Natural killer cell (primary cell): ENCODE measurements at regions of chr13 and their contacts with region 1.

Region 1: DNA sequence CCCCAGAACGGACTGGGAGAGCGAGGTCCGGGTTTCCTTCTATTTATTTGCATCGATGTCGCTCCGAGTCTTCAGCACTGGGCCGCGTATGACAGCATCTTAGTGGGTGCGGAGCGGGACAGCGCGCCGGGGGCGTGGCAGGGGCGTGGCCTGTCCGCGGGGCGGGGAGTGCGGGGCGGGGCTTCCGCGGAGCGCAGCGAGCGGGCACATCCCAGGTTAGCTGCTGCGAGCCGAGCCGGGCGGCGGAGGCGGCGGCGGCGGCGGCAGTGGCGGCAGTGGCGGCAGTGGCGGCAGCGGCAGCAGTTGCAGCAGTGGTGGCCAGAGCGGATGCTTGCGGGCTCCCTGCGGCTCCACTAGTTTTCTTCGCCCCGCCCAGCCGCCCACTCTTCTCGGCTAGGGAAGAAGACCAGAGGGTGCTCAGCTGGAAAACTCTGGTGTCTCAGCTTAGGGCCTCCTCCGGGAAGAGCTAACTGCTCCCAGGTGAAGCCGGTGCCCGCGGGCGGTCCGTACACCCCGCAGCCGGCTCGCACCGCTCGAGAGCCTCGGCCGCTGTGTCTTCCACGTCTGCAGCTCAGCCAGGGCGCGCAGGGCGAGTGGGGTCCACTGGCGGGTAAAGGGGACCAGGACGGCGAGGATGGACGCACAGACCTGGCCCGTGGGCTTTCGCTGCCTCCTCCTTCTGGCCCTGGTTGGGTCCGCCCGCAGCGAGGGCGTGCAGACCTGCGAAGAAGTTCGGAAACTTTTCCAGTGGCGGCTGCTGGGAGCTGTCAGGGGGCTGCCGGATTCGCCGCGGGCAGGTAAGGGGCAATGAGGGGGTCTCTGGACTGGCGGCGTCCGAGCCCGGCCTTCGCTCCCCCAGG is at the start of gene GPC5:
- DNase-seq: peak; percentile 68 to 88
- ATAC-seq: peak; percentile 98 to 99 (median 99)
- H3K4me3 ChIP-seq: peak within 1 kb of the TSS; percentile 45
- H3K4me3 Mint-ChIP-seq: peak within 1 kb of the TSS; percentile 86
- H3K27ac ChIP-seq: no peak within 1 kb of the TSS
- H3K27ac Mint-ChIP-seq: no peak within 1 kb of the TSS
- H3K4me1 ChIP-seq: peaks cover 14% of the 10 kb centered on the region
- H3K4me1 Mint-ChIP-seq: peaks cover 7 to 18% of the 10 kb centered on the region in 2 donors
- H3K27me3 ChIP-seq: peaks cover 27% of the 10 kb centered on the region
- H3K27me3 Mint-ChIP-seq: peaks cover 15 to 46% of the 10 kb centered on the region in 2 donors
- CTCF ChIP-seq: no peak
- total RNA-seq, gene GPC5: not detected

Region 2: GRCh38 chr13:91348906-91349435 is 49.7 kb before region 1 on chr13:
- intact Hi-C with region 1: loop called (anchors 1 kb)
- DNase-seq: peak; percentile 92 to 94
- ATAC-seq: peak; percentile 78 to 93 (median 82)
- H3K4me3 ChIP-seq: peak overlapping the region; percentile 64
- H3K4me3 Mint-ChIP-seq: peak overlapping the region; percentile 92
- H3K27ac ChIP-seq: peak overlapping the region; percentile 14
- H3K27ac Mint-ChIP-seq: peak overlapping the region; percentile 83
- H3K4me1 ChIP-seq: peaks cover 8% of the 10 kb centered on the region
- H3K4me1 Mint-ChIP-seq: peaks cover 16% of the 10 kb centered on the region in 2 donors
- H3K27me3 ChIP-seq: no peaks in the 10 kb centered on the region
- H3K27me3 Mint-ChIP-seq: no peaks in the 10 kb centered on the region
- CTCF ChIP-seq: peak; percentile 80